ENCODE measurements at regions of chr5 and their contacts with region 1.

Region 1: DNA sequence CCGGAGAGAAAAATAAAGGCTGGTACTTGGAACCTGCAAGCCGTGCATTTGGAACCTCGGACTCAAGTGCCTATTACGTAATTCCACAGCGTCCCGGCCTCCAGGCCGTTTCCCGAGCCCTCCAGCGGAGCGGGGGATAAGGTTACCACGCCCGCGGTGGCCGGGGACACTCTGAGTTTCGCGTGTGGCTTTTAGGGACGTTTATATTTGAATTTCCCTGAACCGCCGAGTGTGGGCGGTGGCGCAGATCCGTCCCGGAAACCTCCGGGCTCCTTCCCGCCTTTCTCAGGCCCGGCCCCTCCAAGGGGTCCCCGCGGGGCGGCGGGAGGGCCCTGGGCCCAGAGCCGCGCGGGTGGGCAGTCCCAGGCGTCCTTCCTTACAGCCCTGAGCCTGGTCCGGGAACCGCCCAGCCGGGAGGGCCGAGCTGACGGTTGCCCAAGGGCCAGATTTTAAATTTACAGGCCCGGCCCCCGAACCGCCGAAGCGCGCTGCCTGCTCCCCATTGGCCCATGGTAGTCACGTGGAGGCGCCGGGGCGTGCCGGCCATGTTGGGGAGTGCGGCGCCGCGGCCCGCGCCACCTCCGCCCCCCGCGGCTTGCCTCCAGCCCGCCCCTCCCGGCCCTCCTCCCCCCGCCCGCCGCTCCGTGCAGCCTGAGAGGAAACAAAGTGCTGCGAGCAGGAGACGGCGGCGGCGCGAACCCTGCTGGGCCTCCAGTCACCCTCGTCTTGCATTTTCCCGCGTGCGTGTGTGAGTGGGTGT is at the start of gene LMNB1:
- DNase-seq: peak; percentile 94
- ATAC-seq: peak; percentile 71
- H3K4me3 Mint-ChIP-seq: peak within 1 kb of the TSS; percentile 92
- H3K27ac Mint-ChIP-seq: peak within 1 kb of the TSS; percentile 96
- H3K4me1 Mint-ChIP-seq: peaks cover 36% of the 10 kb centered on the region
- H3K27me3 Mint-ChIP-seq: no peaks in the 10 kb centered on the region
- CTCF ChIP-seq: no peak
- total RNA-seq, gene LMNB1: 34.7 and 35.7 TPM in 2 replicates

Region 2: DNA sequence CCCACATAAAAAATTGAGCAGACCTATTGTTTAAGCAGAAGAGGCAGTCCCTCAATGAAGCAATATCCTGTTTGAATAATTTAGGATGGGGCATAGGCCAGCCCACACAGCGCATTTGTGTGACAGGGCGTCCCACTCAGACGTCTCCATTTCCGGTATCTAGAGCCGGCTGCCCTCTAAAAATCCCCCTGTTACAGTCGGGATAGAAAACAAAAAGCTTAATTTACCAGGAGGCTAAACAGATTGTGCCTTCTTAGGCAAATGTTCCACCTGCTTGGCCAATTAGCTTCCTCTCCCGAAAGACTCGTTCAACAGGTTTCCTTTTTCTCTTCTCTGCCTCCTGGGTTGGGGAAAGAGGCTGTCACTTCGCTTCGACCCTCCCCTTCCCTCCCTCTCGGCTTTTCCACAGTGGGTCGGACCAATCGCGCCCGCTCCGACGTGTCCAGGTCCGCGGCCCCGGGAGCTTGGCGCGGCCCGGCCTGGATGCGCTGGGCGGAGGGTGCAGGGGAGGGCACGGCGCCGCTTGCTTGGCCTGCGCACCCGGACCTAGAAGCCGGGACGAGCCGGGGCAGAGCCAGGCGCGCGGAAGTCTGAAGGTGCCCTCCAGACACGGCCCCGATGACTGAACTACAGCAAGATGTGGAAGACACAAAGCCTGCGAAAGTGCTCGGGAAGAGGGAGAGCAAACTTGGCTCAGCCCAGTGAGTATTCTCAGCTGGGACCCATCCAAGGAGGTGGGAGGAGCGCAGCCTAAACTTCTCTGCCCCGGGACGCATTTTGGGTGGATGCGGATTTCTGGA is 353.5 kb before region 1 on chr5 and contains the start of gene GRAMD2B:
- CTCF ChIA-PET with region 1: no interaction called
- POLR2A ChIA-PET with region 1: interaction called, 3 read pairs
- intact Hi-C with region 1: loop called (anchors 2 kb)
- DNase-seq: peak; percentile 53
- ATAC-seq: peak; percentile 86
- H3K4me3 Mint-ChIP-seq: peak within 1 kb of the TSS; percentile 88
- H3K27ac Mint-ChIP-seq: peak within 1 kb of the TSS; percentile 76
- H3K4me1 Mint-ChIP-seq: peaks cover 26% of the 10 kb centered on the region
- H3K27me3 Mint-ChIP-seq: no peaks in the 10 kb centered on the region
- CTCF ChIP-seq: no peak
- total RNA-seq, gene GRAMD2B: 4.9 and 5.9 TPM in 2 replicates

Region 3: DNA sequence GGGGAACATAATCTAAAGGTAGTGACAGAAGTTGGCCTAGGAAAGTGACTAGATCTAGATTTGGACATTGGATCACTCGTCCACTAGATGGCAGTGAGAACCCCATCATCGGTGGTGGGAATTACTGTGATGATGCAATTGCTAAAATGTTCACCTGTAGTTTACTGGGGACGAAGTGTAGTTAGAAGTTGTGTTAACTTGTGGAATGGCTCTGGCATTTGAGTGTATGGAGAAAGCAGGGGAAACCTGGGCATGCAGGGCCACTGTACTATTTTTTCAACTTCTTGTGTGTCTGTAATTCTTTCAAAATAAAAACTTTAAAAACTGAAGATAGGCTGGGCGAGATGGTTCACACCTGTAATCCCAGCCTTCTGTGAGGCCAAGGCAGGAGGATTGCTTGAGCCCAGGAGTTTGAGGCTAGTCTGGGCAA is 100.5 kb before region 1 on chr5:
- CTCF ChIA-PET with region 1: interaction called, 185 read pairs
- POLR2A ChIA-PET with region 1: interaction called, 16 read pairs
- intact Hi-C with region 1: loop called (anchors 1 kb)
- DNase-seq: peak; percentile 19
- ATAC-seq: peak; percentile 82
- H3K4me3 Mint-ChIP-seq: no peak overlapping the region
- H3K27ac Mint-ChIP-seq: peak overlapping the region; percentile 4
- H3K4me1 Mint-ChIP-seq: peaks cover 3% of the 10 kb centered on the region
- H3K27me3 Mint-ChIP-seq: no peaks in the 10 kb centered on the region
- CTCF ChIP-seq: peak; percentile 67

Region 4: DNA sequence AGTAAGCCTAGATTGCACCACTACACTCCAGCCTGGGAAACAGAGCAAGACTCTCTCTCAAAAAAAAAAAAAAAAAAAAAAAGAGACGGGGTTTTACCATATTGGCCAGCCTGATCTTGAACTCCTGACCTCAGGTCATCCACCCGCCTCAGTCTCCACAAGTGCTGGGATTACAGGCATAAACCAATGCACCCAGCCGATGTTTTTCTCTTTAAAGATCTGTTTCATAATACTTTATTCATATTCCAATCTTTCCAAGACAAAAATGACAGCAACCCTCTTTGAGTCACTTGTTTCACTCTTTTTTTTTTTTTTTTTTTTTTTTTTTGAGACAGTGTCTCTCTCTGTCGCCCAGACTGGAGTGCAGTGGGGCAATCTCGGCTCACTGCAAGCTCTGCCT is 13.3 kb before region 1 on chr5:
- CTCF ChIA-PET with region 1: no interaction called
- POLR2A ChIA-PET with region 1: interaction called, 48 read pairs
- intact Hi-C with region 1: loop called (anchors 1 kb)
- DNase-seq: no peak
- ATAC-seq: no peak
- H3K4me3 Mint-ChIP-seq: no peak overlapping the region
- H3K27ac Mint-ChIP-seq: no peak overlapping the region
- H3K4me1 Mint-ChIP-seq: peaks cover 31% of the 10 kb centered on the region
- H3K27me3 Mint-ChIP-seq: no peaks in the 10 kb centered on the region
- CTCF ChIP-seq: no peak

Region 5: GRCh38 chr5:126808521-126808988 is 31.9 kb after region 1 on chr5:
- CTCF ChIA-PET with region 1: interaction called, 9 read pairs
- POLR2A ChIA-PET with region 1: interaction called, 15 read pairs
- intact Hi-C with region 1: loop called (anchors 1 kb)
- DNase-seq: no peak
- ATAC-seq: peak; percentile 66
- H3K4me3 Mint-ChIP-seq: peak overlapping the region; percentile 66
- H3K27ac Mint-ChIP-seq: peak overlapping the region; percentile 81
- H3K4me1 Mint-ChIP-seq: peaks cover 63% of the 10 kb centered on the region
- H3K27me3 Mint-ChIP-seq: no peaks in the 10 kb centered on the region
- CTCF ChIP-seq: peak; percentile 35

Region 6: DNA sequence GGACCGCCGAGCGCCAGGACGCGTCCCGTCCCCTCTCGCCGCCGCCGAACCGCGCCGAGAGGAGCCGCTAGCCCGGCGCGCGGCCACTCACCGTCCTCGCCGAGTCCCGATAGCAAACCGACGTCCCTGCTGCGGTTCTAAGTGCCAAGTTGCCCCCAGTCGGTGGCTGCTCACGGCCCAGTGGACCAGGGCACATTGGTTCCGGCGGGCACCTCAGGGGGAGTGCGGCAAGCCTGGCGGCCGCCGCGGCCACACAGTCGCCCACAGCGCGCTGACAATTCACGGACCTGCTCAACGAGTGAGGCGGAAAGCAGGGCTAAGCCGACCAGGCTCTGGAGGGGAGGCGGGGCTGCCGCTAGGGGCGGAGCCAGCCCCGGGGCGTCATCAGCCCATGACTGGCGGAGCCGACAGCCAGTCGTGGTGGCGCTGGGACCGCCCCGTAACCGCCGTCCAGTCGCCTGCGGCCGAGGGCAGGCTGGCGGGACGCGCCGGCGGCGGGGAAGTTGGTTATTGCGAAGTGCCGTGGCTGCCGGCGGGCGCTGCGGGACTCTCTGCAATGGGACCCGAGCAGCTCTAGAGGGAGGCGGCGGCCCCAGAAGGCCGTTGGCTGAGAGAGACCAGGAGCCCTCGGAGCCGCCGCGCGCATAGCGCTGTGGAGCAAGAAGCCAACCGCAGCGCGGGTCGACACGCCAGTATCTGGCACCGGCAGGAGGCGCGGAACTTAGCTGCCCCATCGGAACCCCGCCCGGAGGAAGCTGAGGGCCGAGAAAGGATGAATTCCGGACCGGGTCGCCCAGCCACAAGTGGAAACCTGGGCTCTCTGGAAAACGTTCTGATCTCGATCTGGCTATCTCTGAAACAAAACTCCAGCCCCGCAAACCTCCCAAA is 253.8 kb after region 1 on chr5 and contains the start of gene MARCHF3:
- CTCF ChIA-PET with region 1: interaction called, 3 read pairs
- POLR2A ChIA-PET with region 1: interaction called, 16 read pairs
- intact Hi-C with region 1: loop called (anchors 1 kb)
- DNase-seq: peak; percentile 98
- ATAC-seq: peak; percentile 93
- H3K4me3 Mint-ChIP-seq: peak within 1 kb of the TSS; percentile 94
- H3K27ac Mint-ChIP-seq: peak within 1 kb of the TSS; percentile 90
- H3K4me1 Mint-ChIP-seq: peaks cover 45% of the 10 kb centered on the region
- H3K27me3 Mint-ChIP-seq: no peaks in the 10 kb centered on the region
- CTCF ChIP-seq: no peak
- total RNA-seq, gene MARCHF3: 21.9 and 22.8 TPM in 2 replicates

Measured in activated B cell treated with CpG ODN at 0.5 μM for 24 hours (primary cell).